ENCODE measurements at regions of chr16 and their contacts with region 1.

Region 1: GRCh38 chr16:50806099-50807062 is 64.5 kb downstream of the CYLD start:
- DNase-seq: peak; percentile 77 to 97 (median 90)
- ATAC-seq: peak; percentile 98
- H3K4me3 ChIP-seq: peak overlapping the region in 1 of 2 donors; percentile 26
- H3K27ac ChIP-seq: peak overlapping the region; percentile 28 to 67
- H3K4me1 ChIP-seq: peaks cover 0 to 9% of the 10 kb centered on the region in 2 donors
- H3K27me3 ChIP-seq: no peaks in the 10 kb centered on the region
- CTCF ChIP-seq: peak; percentile 93 to 97

Region 2: GRCh38 chr16:49709057-49709456 is 1097.3 kb before region 1 on chr16:
- intact Hi-C with region 1: no loop called
- DNase-seq: no peak
- ATAC-seq: no peak
- H3K4me3 ChIP-seq: no peak overlapping the region
- H3K27ac ChIP-seq: no peak overlapping the region
- H3K4me1 ChIP-seq: no peaks in the 10 kb centered on the region
- H3K27me3 ChIP-seq: no peaks in the 10 kb centered on the region
- CTCF ChIP-seq: no peak

Region 3: GRCh38 chr16:50371936-50372595 is 434.3 kb before region 1 on chr16:
- intact Hi-C with region 1: loop called in 1 of 2 experiments (anchors 10 kb)
- DNase-seq: peak in 2 of 4 donors; percentile 28 to 65
- ATAC-seq: peak; percentile 10
- H3K4me3 ChIP-seq: no peak overlapping the region
- H3K27ac ChIP-seq: no peak overlapping the region
- H3K4me1 ChIP-seq: peaks cover 9 to 16% of the 10 kb centered on the region in 2 donors
- H3K27me3 ChIP-seq: no peaks in the 10 kb centered on the region
- CTCF ChIP-seq: no peak

Region 4: GRCh38 chr16:50671644-50672260 is 134.6 kb before region 1 on chr16:
- intact Hi-C with region 1: loop called in 1 of 2 experiments (anchors 10 kb)
- DNase-seq: no peak
- ATAC-seq: no peak
- H3K4me3 ChIP-seq: no peak overlapping the region
- H3K27ac ChIP-seq: no peak overlapping the region
- H3K4me1 ChIP-seq: peaks cover 5 to 42% of the 10 kb centered on the region in 2 donors
- H3K27me3 ChIP-seq: peaks cover 0 to 10% of the 10 kb centered on the region in 2 donors
- CTCF ChIP-seq: peak; percentile 29 to 71